ENCODE measurements at regions of chr16 and their contacts with region 1.

Region 1: DNA sequence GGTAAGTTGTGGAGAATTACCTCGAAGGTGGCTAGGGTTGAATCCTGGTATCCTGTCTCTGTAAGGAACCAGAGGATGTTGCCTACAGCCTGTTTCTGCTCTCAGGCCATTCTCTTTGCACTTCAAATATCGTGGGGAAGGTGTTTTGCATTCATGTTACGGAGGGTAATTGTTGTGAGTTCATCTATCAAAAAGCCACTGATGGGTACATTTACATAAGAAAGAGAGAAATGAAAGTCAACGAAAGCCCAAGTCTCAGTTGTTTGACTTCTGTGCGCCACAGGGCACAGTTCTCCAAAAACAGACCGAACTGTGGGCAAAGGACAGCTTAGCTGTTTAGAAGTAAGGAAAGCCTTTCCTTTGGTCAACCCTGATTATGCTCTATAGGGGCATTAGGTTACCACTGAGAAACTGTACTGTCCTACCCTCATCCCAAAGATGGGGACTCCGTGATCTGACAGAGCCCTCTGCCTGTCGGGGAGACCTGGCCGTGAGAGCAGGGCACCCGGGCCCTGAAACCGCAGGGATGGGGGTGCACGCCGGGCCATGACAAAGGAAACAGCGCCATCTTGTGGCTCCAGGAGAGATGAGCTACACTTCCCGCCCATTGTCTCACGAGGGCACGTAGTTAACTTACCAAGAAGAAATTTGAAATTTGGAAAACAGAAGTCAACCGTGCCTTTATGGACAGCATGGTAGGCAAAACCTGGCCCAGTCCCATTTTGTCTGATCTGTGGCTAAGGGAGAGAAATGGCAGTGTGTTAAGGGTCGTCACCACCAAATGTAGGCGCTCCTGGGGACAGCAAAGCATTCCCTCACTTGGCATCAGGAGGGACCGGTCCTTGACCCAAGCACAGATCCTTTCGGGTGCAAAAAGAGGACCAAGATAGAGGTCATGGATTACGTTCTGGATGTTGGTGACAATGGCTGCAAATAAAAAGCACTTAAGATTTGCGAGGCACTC is 74.5 kb upstream of the DYNLRB2 start:
- DNase-seq: peak; percentile 42
- ATAC-seq: peak; percentile 85
- H3K4me3 Mint-ChIP-seq: peak overlapping the region; percentile 21
- H3K27ac Mint-ChIP-seq: no peak overlapping the region
- H3K4me1 Mint-ChIP-seq: peaks cover 14% of the 10 kb centered on the region
- H3K27me3 Mint-ChIP-seq: peaks cover 42% of the 10 kb centered on the region
- CTCF ChIP-seq: no peak

Region 2: GRCh38 chr16:78705694-78706093 is 1760.6 kb before region 1 on chr16:
- CTCF ChIA-PET with region 1: no interaction called
- POLR2A ChIA-PET with region 1: no interaction called
- intact Hi-C with region 1: loop called (anchors 5 kb)
- DNase-seq: no peak
- ATAC-seq: no peak
- H3K4me3 Mint-ChIP-seq: no peak overlapping the region
- H3K27ac Mint-ChIP-seq: no peak overlapping the region
- H3K4me1 Mint-ChIP-seq: peaks cover 3% of the 10 kb centered on the region
- H3K27me3 Mint-ChIP-seq: no peaks in the 10 kb centered on the region
- CTCF ChIP-seq: no peak

Region 3: DNA sequence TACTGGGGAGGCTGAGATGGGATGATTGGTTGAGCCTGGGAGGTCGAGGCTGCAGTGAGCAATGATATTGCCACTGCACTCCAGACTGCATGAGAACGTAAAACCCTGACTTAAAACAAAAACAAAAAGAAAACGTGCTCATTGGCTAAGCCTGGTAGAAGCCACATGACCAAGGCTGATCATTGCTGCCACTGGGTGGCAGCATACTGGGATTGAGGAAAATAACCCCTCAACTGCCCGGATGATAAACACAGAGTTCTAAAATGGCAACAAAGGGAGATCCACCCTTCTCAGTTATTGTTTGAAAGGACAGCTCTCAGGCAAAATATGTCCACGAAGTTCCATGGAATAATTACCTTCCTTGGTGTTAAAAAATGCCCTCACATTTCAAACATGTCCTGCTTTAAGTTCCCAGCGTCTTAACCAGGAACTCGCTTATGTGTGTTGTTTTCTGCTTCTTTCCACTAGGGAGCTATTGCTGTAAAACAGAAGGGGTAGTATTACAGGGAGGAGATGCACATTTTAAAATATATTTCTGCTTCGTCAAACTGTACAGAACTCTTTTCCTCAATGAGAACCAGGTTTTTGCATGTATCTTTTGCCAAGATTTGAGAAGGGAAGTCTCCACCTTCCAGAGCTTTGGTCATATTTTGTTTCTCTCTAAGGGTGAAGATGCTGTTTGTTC is 1541.1 kb before region 1 on chr16:
- CTCF ChIA-PET with region 1: no interaction called
- POLR2A ChIA-PET with region 1: no interaction called
- intact Hi-C with region 1: loop called (anchors 10 kb)
- DNase-seq: no peak
- ATAC-seq: no peak
- H3K4me3 Mint-ChIP-seq: no peak overlapping the region
- H3K27ac Mint-ChIP-seq: no peak overlapping the region
- H3K4me1 Mint-ChIP-seq: no peaks in the 10 kb centered on the region
- H3K27me3 Mint-ChIP-seq: no peaks in the 10 kb centered on the region
- CTCF ChIP-seq: no peak

Region 4: DNA sequence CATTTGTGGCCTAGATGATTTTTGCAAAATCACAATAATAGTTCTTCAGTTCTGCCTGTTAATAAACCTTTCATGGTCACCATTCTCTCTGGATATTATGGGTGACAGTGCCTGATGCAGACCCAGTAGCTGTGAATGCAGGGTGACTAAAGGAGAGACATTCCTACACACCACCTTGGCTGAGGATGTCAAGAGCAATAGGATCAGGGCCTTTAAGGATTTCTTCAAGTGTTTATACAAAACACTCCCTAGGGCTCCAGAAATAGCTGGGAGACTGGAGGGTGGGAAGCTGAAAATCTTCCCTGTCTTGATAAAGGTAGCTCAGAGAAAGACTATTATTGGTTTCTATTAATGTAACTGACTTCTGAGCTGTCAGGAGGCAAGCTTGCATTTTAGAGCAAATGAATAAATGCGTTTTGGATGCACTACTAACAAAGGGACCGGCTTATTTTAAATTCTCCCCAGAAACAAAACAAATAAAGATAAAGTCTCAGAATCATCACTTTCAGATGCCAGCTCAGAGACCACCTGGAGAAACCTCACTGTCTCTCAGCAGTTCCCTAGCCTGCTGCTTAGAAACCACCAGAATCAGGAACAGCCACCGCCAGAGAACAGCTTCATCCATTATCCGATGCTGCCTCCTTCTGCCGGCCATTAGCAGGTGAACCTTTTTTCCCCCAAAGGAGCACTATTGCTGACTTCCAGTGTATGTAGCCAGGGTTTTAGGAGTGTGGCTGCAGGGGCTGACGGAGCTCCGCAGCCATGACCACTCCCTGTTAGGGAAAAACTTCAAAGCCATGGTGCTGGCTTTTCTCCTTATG is 97.0 kb before region 1 on chr16:
- CTCF ChIA-PET with region 1: no interaction called
- POLR2A ChIA-PET with region 1: no interaction called
- intact Hi-C with region 1: no loop called
- DNase-seq: no peak
- ATAC-seq: no peak
- H3K4me3 Mint-ChIP-seq: no peak overlapping the region
- H3K27ac Mint-ChIP-seq: no peak overlapping the region
- H3K4me1 Mint-ChIP-seq: no peaks in the 10 kb centered on the region
- H3K27me3 Mint-ChIP-seq: peaks cover 2% of the 10 kb centered on the region
- CTCF ChIP-seq: no peak

Region 5: DNA sequence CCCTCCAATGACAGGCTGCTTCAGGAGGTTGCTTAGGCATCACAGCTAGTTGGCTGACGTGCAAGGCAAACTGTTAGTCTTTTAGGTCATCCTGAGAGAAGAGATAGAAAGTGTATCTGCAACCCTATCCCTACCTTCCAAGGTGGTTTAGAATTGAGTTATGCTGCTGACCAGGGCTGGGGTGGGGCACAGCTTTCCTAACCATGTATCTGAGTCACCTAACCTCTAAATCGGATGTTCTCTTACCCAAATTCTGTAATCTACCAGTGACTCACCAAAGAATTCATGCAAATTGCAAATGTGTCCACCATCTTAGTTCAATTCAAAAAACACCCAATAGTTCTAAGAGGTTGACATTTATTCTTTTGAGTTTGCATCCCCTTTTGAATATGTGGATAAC is 32.7 kb before region 1 on chr16:
- CTCF ChIA-PET with region 1: no interaction called
- POLR2A ChIA-PET with region 1: no interaction called
- intact Hi-C with region 1: no loop called
- DNase-seq: no peak
- ATAC-seq: no peak
- H3K4me3 Mint-ChIP-seq: no peak overlapping the region
- H3K27ac Mint-ChIP-seq: no peak overlapping the region
- H3K4me1 Mint-ChIP-seq: no peaks in the 10 kb centered on the region
- H3K27me3 Mint-ChIP-seq: peaks cover 17% of the 10 kb centered on the region
- CTCF ChIP-seq: no peak

Measured in activated B cell treated with CpG ODN at 0.5 μM for 24 hours (primary cell).